ENCODE measurements at regions of chr1 and their contacts with region 1.

Region 1: GRCh38 chr1:85259118-85259911 is at the start of gene C1orf52:
- DNase-seq: peak; percentile 88 to 100
- H3K4me3 ChIP-seq: peak within 1 kb of the TSS; percentile 79 to 94 (median 85)
- H3K27ac ChIP-seq: peak within 1 kb of the TSS; percentile 69; the same call in 1 of the 2 replicates
- H3K4me1 ChIP-seq: peaks cover 0 to 4% (median 2%) of the 10 kb centered on the region in 4 experiments; a peak in 3 of 7 replicates
- H3K27me3 ChIP-seq: no peaks in the 10 kb centered on the region
- CTCF ChIP-seq: peak; percentile 88 to 94 (median 89)
- EP300 ChIP-seq: peak in 1 of 2 experiments; percentile 62; a peak in 1 of 3 replicates
- POLR2A ChIP-seq: peak; percentile 50 to 91
- RAD21 ChIP-seq: peak; percentile 56 to 71
- total RNA-seq, gene C1orf52: 39.1 and 39.3 TPM in 2 replicates

Region 2: GRCh38 chr1:84995484-84996334 is 263.6 kb before region 1 on chr1:
- CTCF ChIA-PET with region 1: no interaction called
- POLR2A ChIA-PET with region 1: no interaction called
- DNase-seq: no peak
- H3K4me3 ChIP-seq: peak overlapping the region in 2 of 4 experiments; percentile 50 to 64; a peak in 3 of 8 replicates
- H3K27ac ChIP-seq: no peak overlapping the region
- H3K4me1 ChIP-seq: peaks cover 0 to 2% (median 0%) of the 10 kb centered on the region in 4 experiments; a peak in 2 of 7 replicates
- H3K27me3 ChIP-seq: peaks cover 19 to 43% (median 32%) of the 10 kb centered on the region in 4 experiments
- CTCF ChIP-seq: no peak
- EP300 ChIP-seq: no peak
- POLR2A ChIP-seq: no peak
- RAD21 ChIP-seq: no peak

Region 3: DNA sequence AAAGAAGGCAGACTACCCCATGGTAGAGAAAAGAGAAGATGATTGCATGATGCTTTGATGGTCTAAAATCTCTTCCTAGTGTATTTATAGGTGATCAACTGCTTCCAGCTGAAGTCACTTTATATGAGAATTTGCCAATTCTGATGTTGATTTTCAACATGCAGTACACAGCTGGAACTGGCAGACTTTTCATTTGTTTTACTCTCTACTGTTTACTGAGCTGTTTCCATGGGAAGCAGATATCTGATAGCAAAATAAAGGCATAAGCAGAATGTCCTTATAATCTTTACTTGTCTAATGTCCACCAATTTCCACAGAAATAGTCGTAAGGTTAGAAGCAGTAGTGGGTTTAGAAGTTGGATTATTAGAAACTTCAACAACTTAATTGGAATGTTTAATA is 133.4 kb before region 1 on chr1:
- CTCF ChIA-PET with region 1: interaction called, 12 read pairs
- POLR2A ChIA-PET with region 1: no interaction called
- DNase-seq: no peak
- H3K4me3 ChIP-seq: no peak overlapping the region
- H3K27ac ChIP-seq: no peak overlapping the region
- H3K4me1 ChIP-seq: no peaks in the 10 kb centered on the region
- H3K27me3 ChIP-seq: peaks cover 0 to 1% (median 0%) of the 10 kb centered on the region in 4 experiments; a peak in 1 of 7 replicates
- CTCF ChIP-seq: no peak
- EP300 ChIP-seq: no peak
- POLR2A ChIP-seq: no peak
- RAD21 ChIP-seq: no peak

Region 4: DNA sequence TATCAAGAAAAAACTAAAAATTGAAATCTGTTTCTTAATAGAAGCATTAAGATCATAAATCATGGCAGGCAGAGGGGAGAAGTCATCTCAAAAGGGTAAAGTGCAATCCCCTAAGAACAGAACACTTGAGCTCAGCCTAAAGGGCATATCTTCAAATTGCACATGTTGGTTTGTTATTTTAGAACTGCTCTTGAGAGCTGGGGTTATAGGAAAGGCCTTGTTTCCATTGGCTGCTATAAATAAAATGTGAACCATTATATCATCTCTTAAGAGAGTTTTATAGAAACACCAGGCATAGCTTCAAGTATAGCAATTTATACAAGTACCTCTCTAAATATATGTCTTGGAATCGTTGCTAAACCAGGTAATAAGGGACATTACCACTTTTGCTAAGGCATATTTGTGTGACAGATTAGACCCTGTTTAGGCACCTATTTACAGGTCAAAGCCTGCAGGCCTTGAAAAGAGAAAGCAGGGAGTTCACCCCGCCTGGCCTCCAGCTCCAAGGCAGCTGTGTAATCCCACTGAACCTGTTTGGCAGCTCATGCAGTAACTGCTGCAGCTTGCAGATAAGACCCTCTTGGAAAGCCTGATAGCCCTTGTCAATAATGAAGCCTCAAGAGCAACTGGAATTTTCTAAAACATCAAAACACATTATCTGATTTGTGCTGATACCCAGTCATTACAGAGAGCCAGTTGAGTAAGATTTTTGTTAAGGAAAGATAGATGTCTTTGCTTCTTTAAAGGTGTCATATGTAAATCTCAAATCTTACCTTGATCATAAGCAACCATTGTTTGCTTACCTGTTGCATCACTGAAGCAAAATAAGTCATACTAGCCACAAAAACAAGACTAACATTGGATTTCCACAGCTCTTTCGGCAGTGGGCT is 34.3 kb before region 1 on chr1:
- CTCF ChIA-PET with region 1: interaction called, 15 read pairs
- POLR2A ChIA-PET with region 1: interaction called, 4 read pairs
- DNase-seq: peak; percentile 38 to 60
- H3K4me3 ChIP-seq: peak overlapping the region in 2 of 4 experiments; percentile 1 to 5; a peak in 2 of 8 replicates
- H3K27ac ChIP-seq: 0 out of 2 replicates have a peak overlapping the region, but pooled peaks have one; percentile 2
- H3K4me1 ChIP-seq: peaks cover 0 to 15% (median 4%) of the 10 kb centered on the region in 4 experiments; a peak in 4 of 7 replicates
- H3K27me3 ChIP-seq: no peaks in the 10 kb centered on the region
- CTCF ChIP-seq: no peak
- EP300 ChIP-seq: peak in 1 of 2 experiments; percentile 68; a peak in 1 of 3 replicates
- POLR2A ChIP-seq: no peak
- RAD21 ChIP-seq: peak in 1 of 2 experiments; percentile 22; a peak in 1 of 4 replicates

Region 5: GRCh38 chr1:85240174-85240601 is 19.1 kb before region 1 on chr1:
- CTCF ChIA-PET with region 1: interaction called, 115 read pairs
- POLR2A ChIA-PET with region 1: no interaction called
- DNase-seq: no peak
- H3K4me3 ChIP-seq: no peak overlapping the region
- H3K27ac ChIP-seq: no peak overlapping the region
- H3K4me1 ChIP-seq: peaks cover 0 to 1% (median 0%) of the 10 kb centered on the region in 4 experiments; a peak in 2 of 7 replicates
- H3K27me3 ChIP-seq: no peaks in the 10 kb centered on the region
- CTCF ChIP-seq: peak in 2 of 3 experiments; percentile 48 to 64; a peak in 3 of 4 replicates
- EP300 ChIP-seq: no peak
- POLR2A ChIP-seq: no peak
- RAD21 ChIP-seq: peak; percentile 79 to 85

Region 6: DNA sequence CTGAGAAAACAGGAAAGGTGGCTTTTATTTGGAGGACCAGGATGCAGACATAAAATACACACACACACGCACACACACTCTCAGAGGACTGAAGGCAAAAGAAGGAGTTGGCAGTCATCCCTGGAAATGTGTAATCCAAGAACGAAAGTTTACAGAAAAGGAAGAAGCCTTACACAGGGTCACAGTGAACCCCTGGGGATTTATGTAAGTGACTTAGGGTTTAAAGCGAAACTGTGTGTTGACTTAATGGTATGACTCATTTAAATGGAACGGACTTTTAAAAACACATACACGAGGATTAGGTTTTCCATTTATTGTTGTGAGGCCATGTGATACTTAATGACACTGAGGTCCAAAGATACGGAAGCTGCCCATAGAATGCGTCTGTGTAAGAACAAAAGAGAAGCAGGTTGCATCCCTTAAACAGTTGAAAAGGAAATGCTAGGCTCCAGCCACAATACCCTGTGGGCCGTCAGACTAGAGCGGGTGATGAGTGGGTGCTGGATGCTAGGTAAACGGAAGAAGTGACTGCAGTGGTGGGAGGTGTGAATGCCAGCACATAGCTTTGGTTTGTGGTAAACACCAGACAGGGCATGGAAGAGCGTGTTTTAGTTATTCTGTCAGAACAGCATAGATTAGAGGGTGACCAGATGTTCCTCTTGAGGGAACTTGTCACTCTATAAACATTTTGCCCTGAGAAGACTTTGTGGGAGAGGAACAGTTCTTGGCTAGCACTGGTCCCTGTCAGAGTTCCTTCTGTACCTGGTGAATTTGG is 38.7 kb after region 1 on chr1:
- CTCF ChIA-PET with region 1: interaction called, 11 read pairs
- POLR2A ChIA-PET with region 1: no interaction called
- DNase-seq: no peak
- H3K4me3 ChIP-seq: no peak overlapping the region
- H3K27ac ChIP-seq: no peak overlapping the region
- H3K4me1 ChIP-seq: peaks cover 0 to 2% (median 0%) of the 10 kb centered on the region in 4 experiments; a peak in 1 of 7 replicates
- H3K27me3 ChIP-seq: no peaks in the 10 kb centered on the region
- CTCF ChIP-seq: no peak
- EP300 ChIP-seq: no peak
- POLR2A ChIP-seq: no peak
- RAD21 ChIP-seq: no peak

Measured in H1 (cell line).